Left ventricle myocardium superior (tissue), 1 donor: ENCODE measurements at regions of chrX and their contacts with region 1.

Region 1: DNA sequence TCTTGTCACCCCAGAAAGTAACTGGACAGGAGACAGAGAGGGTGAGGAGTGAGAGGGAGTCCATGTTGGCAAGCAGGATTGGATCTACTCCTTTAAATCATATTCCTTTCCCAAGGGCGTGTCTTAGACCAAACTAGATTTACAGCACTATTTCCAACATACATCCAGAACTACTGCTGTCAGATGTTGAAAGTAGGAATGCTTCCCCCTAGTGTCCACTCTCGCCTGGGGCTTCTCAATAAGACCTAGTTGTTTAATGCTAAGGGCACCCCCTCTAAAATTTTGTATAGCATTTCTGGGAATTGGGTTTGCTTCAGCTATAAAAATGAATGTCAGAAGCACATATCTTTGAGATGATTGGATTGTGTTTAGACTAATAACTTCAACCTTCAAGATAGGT is 13.3 kb downstream of the OFD1 start:
- DNase-seq: peak; percentile 30
- ATAC-seq: peak; percentile 52

Region 2: DNA sequence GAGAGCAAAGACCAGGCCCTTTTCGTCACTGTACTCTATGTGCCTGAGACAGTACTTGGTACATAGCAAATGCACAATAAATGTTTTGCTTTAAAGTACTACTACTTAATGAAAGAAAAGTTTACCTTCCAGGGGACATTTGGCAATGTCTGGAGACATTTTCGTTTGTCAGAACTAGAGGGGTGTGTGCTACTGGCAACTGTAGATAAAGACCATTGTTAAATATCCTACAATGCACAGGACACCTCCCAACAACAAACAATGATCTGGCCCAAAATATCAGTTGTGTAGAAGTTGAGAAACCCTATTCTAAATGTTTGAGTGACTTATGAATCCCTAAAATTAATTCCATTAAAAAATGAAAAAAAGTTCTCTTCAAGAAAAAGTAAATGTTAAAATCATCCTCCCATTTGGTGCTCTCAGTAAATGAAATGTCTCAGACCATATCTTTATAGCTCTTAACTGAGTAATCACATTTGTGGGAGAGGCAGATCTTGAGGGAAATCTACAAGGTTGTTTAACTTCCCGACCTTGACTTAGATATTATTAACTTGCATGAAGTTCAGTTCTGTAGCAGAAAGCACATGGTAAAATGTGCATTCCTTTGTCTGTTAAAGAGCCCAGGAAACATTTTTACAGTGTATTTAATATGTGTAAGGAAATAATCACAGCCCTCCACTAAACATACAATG is 159.9 kb before region 1 on chrX:
- intact Hi-C with region 1: no loop called
- DNase-seq: no peak
- ATAC-seq: no peak

Region 3: GRCh38 chrX:13607996-13608365 is 139.9 kb before region 1 on chrX:
- intact Hi-C with region 1: no loop called
- DNase-seq: no peak
- ATAC-seq: no peak

Region 4: DNA sequence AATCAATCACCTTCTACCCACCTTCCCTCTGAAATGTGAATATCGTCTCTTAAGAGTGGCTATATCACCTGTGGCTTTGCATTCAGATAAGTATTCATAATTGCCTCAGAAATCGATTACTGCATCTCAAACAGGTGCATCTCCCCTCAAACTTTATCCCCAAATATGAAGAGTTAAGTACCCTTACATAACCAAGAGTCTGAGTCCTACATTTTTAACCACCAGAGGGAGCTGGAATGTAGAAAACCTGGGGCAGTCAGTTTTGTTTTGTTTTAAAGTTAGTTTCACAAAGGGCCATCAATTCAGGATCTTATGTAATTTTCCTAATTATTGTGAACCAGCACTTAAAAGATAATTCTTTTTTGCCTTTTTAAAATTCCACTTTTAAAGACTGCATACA is 89.2 kb before region 1 on chrX:
- intact Hi-C with region 1: loop called (anchors 5 kb)
- DNase-seq: no peak
- ATAC-seq: peak; percentile 65